H1 (cell line): ENCODE measurements at regions of chr17 and their contacts with region 1.

Region 1: DNA sequence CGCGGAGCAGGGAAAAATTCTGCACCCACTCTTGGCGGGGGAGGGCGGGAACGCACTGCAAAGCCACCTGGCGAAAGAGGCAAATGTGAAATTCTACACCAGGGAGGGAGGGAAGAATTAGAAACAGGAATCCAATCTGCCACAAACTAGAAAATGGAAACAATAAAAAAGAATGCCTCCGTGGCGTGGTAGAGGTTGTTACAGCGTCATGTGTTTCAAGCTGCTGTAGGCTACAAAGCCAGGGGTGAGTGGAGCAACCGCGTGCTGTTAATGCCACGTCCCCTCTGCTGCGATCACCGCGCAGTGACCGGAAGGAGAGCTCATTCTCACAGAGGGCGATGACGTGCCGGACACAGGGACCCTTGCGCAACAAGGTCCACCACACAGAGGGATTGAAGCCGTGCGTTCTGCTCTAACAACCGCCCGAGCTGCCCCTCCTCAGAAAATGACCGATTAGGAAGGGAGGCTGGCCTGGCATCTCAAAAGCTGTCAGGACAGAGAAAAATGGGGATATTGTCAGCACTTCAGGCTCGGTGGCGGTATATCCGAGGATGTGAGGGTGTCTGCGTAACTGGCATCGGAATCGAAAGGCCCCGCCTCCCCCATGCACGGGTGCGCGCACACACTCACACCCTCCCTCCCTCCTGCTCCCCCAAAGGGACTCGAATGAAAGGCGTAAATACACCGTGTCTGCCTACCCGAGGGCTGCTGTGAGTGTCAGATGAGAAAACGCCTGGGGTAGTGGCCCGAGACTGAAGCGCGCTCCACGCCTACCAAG is 70.8 kb upstream of the TNRC6C start:
- DNase-seq: no peak
- H3K4me3 ChIP-seq: peak overlapping the region; percentile 42 to 63 (median 55); a peak in 7 of 8 replicates
- H3K27ac ChIP-seq: no peak overlapping the region
- H3K4me1 ChIP-seq: peaks cover 0 to 18% (median 12%) of the 10 kb centered on the region in 4 experiments; a peak in 6 of 7 replicates
- H3K27me3 ChIP-seq: peaks cover 7 to 30% (median 22%) of the 10 kb centered on the region in 4 experiments; a peak in 6 of 7 replicates
- CTCF ChIP-seq: no peak
- EP300 ChIP-seq: no peak
- POLR2A ChIP-seq: no peak
- RAD21 ChIP-seq: no peak

Region 2: GRCh38 chr17:77634710-77635109 is 252.9 kb before region 1 on chr17:
- CTCF ChIA-PET with region 1: no interaction called
- POLR2A ChIA-PET with region 1: no interaction called
- DNase-seq: no peak
- H3K4me3 ChIP-seq: no peak overlapping the region
- H3K27ac ChIP-seq: no peak overlapping the region
- H3K4me1 ChIP-seq: peaks cover 0 to 8% (median 2%) of the 10 kb centered on the region in 4 experiments; a peak in 5 of 7 replicates
- H3K27me3 ChIP-seq: no peaks in the 10 kb centered on the region
- CTCF ChIP-seq: no peak
- EP300 ChIP-seq: no peak
- POLR2A ChIP-seq: no peak
- RAD21 ChIP-seq: no peak

Region 3: DNA sequence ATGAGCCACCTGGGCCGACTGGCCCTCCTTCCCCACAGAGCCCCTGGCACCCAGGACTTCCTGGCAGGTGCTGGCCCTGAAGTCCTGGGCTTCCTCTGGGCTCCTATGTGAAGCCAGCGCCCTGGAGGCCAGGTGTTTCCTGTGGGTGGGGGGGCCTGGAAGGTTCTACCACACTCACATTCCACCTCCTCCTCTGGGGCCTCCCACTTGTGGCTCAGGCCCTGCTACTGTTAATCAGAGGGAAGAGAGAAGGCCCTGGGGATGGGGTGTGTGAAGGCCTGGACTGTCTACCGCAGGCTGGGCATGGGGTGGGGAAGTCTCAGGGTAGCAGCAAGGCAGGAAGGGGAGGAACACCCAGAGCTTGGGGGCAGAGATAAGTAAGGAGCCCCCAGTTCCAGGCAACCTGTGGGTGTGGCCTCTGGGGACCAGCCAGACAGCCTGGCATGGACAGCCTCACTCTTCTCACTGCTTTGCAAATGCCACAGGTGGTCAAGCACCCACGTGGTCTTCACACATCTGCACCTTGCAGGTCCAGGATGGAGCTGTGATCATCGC is 41.0 kb before region 1 on chr17:
- CTCF ChIA-PET with region 1: interaction called, 13 read pairs
- POLR2A ChIA-PET with region 1: interaction called, 3 read pairs
- DNase-seq: no peak
- H3K4me3 ChIP-seq: no peak overlapping the region
- H3K27ac ChIP-seq: no peak overlapping the region
- H3K4me1 ChIP-seq: peaks cover 0 to 7% (median 0%) of the 10 kb centered on the region in 4 experiments; a peak in 2 of 7 replicates
- H3K27me3 ChIP-seq: peaks cover 0 to 1% (median 0%) of the 10 kb centered on the region in 4 experiments; a peak in 1 of 7 replicates
- CTCF ChIP-seq: no peak
- EP300 ChIP-seq: no peak
- POLR2A ChIP-seq: no peak
- RAD21 ChIP-seq: no peak

Region 4: GRCh38 chr17:77869665-77870132 is 18.0 kb before region 1 on chr17:
- CTCF ChIA-PET with region 1: interaction called, 12 read pairs
- POLR2A ChIA-PET with region 1: interaction called, 3 read pairs
- DNase-seq: no peak
- H3K4me3 ChIP-seq: no peak overlapping the region
- H3K27ac ChIP-seq: no peak overlapping the region
- H3K4me1 ChIP-seq: peaks cover 0 to 11% (median 2%) of the 10 kb centered on the region in 4 experiments; a peak in 5 of 7 replicates
- H3K27me3 ChIP-seq: peaks cover 0 to 2% (median 0%) of the 10 kb centered on the region in 4 experiments; a peak in 1 of 7 replicates
- CTCF ChIP-seq: no peak
- EP300 ChIP-seq: no peak
- POLR2A ChIP-seq: no peak
- RAD21 ChIP-seq: no peak

Region 5: DNA sequence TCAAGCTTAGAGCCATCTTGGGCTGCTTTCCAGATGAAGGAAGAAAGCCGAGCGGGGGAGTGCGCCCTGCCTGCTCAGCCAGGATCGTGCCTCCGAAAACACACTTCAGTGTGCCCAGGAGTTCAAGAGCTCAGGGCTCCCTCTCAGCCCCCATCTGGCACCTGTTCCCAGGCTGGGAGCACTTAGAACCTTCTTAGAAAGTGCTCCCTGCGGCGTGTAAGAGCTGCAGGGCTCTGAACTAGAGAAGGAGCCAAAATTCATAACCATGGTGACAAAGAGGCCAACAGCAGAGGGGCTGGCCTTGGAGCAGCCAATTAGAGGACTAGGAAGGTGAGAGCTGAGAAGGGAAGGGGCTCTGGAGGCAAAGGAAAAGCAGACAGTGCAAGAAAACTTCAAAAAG is 11.8 kb after region 1 on chr17:
- CTCF ChIA-PET with region 1: interaction called, 14 read pairs
- POLR2A ChIA-PET with region 1: interaction called, 4 read pairs
- DNase-seq: no peak
- H3K4me3 ChIP-seq: no peak overlapping the region
- H3K27ac ChIP-seq: no peak overlapping the region
- H3K4me1 ChIP-seq: no peaks in the 10 kb centered on the region
- H3K27me3 ChIP-seq: no peaks in the 10 kb centered on the region
- CTCF ChIP-seq: no peak
- EP300 ChIP-seq: no peak
- POLR2A ChIP-seq: no peak
- RAD21 ChIP-seq: no peak

Region 6: GRCh38 chr17:77909236-77909635 is 21.6 kb after region 1 on chr17:
- CTCF ChIA-PET with region 1: interaction called, 21 read pairs
- POLR2A ChIA-PET with region 1: no interaction called
- DNase-seq: no peak
- H3K4me3 ChIP-seq: no peak overlapping the region
- H3K27ac ChIP-seq: no peak overlapping the region
- H3K4me1 ChIP-seq: peaks cover 0 to 8% (median under 1%) of the 10 kb centered on the region in 4 experiments; a peak in 3 of 7 replicates
- H3K27me3 ChIP-seq: 0 out of 7 replicates have a peak, but pooled peaks cover 0 to 2% (median 0%) of the 10 kb centered on the region in 4 experiments
- CTCF ChIP-seq: no peak
- EP300 ChIP-seq: no peak
- POLR2A ChIP-seq: no peak
- RAD21 ChIP-seq: no peak

Region 7: DNA sequence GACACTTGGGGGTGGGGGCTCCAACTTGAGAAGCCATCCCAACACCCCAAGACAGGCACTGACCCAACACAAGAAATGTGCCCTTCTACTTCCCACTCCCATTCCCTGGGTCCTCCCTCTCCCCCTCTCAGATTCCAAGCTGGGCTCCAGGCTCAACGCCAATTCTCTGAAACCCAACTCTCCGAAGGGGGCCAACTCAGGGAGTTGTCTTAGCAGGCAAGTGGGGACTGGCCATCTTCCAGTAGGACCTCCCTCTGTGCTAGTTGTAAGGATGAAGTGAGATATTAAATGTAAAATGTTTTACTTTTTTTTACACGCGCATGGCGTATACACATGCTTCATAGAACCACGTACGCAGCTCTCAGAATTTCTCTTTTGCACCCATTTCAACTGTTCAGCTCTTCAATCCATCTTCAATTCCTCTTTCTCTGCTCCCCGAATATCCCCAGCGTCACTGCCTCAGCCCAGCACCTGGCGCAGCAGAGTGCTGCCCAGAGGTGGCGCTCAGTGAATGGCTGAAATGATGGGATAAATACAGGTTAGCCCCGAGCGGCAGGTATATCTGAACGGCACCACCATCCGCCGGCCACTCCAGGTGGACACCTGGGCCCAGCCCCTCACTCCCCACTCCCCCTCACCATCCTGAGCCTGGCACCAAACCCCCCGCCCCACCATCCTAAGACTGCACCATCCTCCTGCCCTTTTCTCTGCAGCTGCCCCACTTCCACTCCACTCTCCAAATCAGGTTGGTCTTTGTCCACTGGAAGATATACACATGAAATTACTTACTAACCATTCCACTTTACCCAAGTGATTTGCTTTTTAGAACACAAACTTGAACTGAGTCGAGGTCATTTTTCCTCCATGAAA is 27.0 kb after region 1 on chr17:
- CTCF ChIA-PET with region 1: interaction called, 11 read pairs
- POLR2A ChIA-PET with region 1: no interaction called
- DNase-seq: no peak
- H3K4me3 ChIP-seq: no peak overlapping the region
- H3K27ac ChIP-seq: no peak overlapping the region
- H3K4me1 ChIP-seq: peaks cover 0 to 3% (median 0%) of the 10 kb centered on the region in 4 experiments; a peak in 1 of 7 replicates
- H3K27me3 ChIP-seq: no peaks in the 10 kb centered on the region; a peak in 1 of 7 replicates
- CTCF ChIP-seq: peak; percentile 70 to 80 (median 75)
- EP300 ChIP-seq: no peak
- POLR2A ChIP-seq: no peak
- RAD21 ChIP-seq: peak; percentile 79 to 84

Region 8: GRCh38 chr17:78032166-78032565 is 144.5 kb after region 1 on chr17:
- CTCF ChIA-PET with region 1: no interaction called
- POLR2A ChIA-PET with region 1: no interaction called
- DNase-seq: no peak
- H3K4me3 ChIP-seq: no peak overlapping the region
- H3K27ac ChIP-seq: no peak overlapping the region
- H3K4me1 ChIP-seq: no peaks in the 10 kb centered on the region
- H3K27me3 ChIP-seq: peaks cover 0 to 1% (median 0%) of the 10 kb centered on the region in 4 experiments; a peak in 1 of 7 replicates
- CTCF ChIP-seq: no peak
- EP300 ChIP-seq: no peak
- POLR2A ChIP-seq: no peak
- RAD21 ChIP-seq: no peak